ENCODE measurements at regions of chr1 and their contacts with region 1.

Region 1: GRCh38 chr1:3717041-3717714 is 35.1 kb upstream of the CCDC27 start:
- DNase-seq: no peak
- CTCF ChIP-seq: no peak

Region 2: DNA sequence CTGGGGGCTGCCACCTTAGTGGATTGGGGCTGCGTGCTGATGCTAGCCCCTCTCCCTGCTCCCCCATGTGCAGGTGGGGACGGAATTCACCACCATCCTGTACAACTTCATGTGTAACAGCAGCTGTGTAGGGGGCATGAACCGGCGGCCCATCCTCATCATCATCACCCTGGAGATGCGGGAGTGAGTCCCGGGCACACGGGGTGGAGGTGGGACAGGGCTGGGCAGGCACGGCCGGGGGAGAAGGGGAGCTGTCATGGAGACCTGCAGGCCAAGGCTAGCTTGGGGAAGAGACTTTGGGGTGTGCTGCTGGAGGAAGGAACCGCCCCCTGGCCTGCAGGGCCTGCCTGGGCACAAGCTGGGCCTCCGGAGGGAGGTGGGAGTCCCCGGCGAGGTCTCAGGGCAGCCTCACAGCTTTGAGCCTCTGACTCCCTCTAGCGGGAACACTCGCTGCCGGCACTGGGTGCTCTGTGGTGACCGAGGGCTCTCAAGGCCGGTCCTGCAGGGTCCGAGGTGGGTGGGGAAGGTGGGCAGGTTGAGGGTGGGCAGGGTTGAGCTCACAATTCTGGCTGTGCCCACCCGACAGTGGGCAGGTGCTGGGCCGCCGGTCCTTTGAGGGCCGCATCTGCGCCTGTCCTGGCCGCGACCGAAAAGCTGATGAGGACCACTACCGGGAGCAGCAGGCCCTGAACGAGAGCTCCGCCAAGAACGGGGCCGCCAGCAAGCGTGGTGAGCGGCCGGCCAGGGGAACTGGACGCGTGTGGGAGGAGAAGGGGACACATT is 10.1 kb after region 1 on chr1:
- CTCF ChIA-PET with region 1: interaction called, 25 read pairs
- POLR2A ChIA-PET with region 1: no interaction called
- DNase-seq: peak; percentile 80
- CTCF ChIP-seq: peak; percentile 51